K562 (cell line): ENCODE measurements at regions of chr6 and their contacts with region 1.

Region 1: DNA sequence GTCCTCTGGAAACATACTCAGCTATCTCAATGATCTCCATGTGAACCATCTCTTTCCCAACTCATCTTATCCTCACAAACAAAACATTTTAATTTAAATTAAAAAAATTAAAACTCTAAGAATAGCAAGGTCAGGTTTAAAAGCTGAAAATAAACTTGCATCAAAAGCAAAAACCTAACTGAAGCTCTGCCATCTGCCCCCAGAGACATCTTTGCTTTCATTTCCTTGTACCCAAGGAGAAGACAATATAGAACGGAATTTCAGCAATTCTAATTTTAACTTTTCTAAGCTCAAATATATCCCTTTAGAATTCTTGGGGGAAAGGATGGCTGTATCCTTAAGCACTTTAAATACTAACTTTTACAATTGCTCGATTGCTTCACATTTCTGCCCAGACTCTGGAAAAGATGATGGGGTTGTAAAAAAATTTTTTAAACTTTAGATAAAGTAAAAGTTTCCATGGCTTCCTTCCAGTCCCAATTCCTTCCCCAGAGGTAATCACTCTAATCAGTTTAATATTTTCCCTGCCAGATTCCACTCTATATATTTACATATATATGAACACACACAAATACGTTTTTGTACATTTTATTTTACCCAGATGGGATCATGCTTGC is 69.2 kb upstream of the SMIM29 start:
- DNase-seq: no peak
- ATAC-seq: no peak
- H3K4me3 ChIP-seq: no peak overlapping the region
- H3K27ac ChIP-seq: peak overlapping the region; percentile 75; the same call in 2 of the 3 replicates
- H3K4me1 ChIP-seq: peaks cover 14 to 50% of the 10 kb centered on the region in 2 experiments
- H3K27me3 ChIP-seq: no peaks in the 10 kb centered on the region
- CTCF ChIP-seq: no peak
- EP300 ChIP-seq: no peak
- POLR2A ChIP-seq: no peak
- RAD21 ChIP-seq: no peak

Region 2: DNA sequence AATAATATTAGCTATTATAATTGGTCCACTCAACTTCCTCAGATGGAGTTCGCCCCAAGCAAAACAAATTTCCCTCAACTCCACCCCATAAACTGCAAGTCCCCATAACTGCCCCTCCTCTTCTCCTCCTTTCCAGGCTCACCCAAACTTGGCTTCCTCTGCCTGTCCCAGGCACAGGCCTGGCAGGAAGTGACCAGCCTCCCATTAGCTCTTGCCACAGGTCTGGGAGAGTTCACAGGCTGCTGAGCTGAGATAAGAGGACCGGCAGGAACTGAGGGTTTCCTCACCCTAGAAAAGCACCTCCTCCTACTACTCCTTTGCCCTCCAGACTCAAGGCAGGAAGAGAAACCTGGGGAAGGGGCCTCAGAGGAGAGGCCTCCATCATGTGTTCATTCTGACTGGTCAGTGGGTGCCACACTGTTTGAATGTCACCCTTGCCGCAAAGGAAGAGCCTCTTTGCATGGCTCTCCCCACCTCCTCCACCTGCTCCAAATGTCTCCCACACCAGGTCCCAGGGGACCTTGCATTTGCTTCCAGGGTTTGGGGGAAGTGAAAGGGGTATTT is 44.7 kb before region 1 on chr6:
- CTCF ChIA-PET with region 1: no interaction called
- POLR2A ChIA-PET with region 1: no interaction called
- in situ Hi-C with region 1: no loop called
- intact Hi-C with region 1: loop called (anchors 1 kb)
- DNase-seq: peak; percentile 82 to 99 (median 90)
- ATAC-seq: peak; percentile 94
- H3K4me3 ChIP-seq: no peak overlapping the region
- H3K27ac ChIP-seq: peak overlapping the region; percentile 91
- H3K4me1 ChIP-seq: peaks cover 39 to 55% of the 10 kb centered on the region in 2 experiments
- H3K27me3 ChIP-seq: no peaks in the 10 kb centered on the region
- CTCF ChIP-seq: no peak
- EP300 ChIP-seq: peak; percentile 98
- POLR2A ChIP-seq: peak; percentile 60
- RAD21 ChIP-seq: peak in 1 of 2 experiments; percentile 51; a peak in 3 of 4 replicates

Region 3: DNA sequence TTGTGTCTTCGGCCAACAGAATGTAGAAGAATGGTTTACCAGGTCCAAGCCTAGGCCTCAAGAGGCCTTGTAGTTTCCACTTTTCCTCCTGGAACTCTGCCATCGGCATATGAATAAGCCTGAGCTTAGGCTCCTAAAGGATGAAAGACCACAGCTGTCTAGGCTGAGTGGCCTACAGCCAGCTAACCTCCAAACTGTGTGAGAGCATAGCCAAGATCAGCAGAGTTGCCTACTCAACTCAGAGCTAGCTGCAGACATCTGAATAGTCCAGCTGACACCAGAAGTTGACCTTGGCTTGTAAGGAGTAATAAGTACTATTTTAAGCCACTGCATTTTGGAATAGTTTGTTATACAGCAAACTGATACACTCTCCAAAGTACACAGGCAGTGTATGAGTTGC is 16.6 kb before region 1 on chr6:
- CTCF ChIA-PET with region 1: no interaction called
- POLR2A ChIA-PET with region 1: interaction called, 15 read pairs
- in situ Hi-C with region 1: no loop called
- intact Hi-C with region 1: no loop called
- DNase-seq: peak in 1 of 4 experiments; percentile 42
- ATAC-seq: peak; percentile 51
- H3K4me3 ChIP-seq: no peak overlapping the region
- H3K27ac ChIP-seq: peak overlapping the region; percentile 24; the same call in 1 of the 3 replicates
- H3K4me1 ChIP-seq: peaks cover 5 to 25% of the 10 kb centered on the region in 2 experiments
- H3K27me3 ChIP-seq: no peaks in the 10 kb centered on the region
- CTCF ChIP-seq: no peak
- EP300 ChIP-seq: no peak
- POLR2A ChIP-seq: no peak
- RAD21 ChIP-seq: no peak